Calu3 (cell line): ENCODE measurements at regions of chr18 and their contacts with region 1.

Region 1: DNA sequence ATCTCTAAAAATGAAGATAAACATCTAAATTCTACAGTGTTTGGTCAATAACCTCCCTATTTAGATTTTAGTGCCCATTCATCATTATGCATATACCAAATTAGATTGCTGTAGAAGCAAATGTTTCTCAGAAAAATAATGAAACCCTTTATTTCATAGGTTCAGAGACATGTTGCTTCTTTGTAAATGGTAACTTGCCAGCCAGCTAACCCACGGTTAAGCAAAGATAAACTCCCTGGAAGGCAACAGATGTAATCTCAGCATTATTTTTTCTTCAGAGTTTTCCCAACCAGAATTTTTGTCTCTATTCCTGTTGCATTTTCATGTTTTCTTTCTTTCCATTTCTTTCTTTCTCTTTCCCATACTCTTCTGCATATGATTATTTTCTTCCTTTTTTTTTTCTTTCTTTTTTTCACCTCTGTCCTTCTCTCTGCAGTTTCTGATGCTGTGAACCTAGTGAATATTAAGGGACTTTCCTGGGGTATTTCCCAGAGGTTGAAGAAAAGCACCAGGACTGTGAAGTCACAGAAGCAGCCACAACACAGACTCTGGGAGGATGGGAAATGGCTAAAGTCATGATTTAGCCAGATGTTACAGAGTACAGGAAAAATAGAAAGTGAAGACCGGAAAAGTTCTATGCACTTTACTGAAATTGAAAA is 50.0 kb upstream of the DSG1 start:
- DNase-seq: no peak
- H3K4me3 Mint-ChIP-seq: no peak overlapping the region
- H3K27ac Mint-ChIP-seq: peak overlapping the region; percentile 15
- H3K4me1 Mint-ChIP-seq: peaks cover 40% of the 10 kb centered on the region
- H3K27me3 Mint-ChIP-seq: no peaks in the 10 kb centered on the region
- CTCF ChIP-seq: no peak

Region 2: GRCh38 chr18:31399306-31400032 is 131.5 kb after region 1 on chr18:
- CTCF ChIA-PET with region 1: no interaction called
- intact Hi-C with region 1: loop called (anchors 5 kb)
- DNase-seq: peak; percentile 21
- H3K4me3 Mint-ChIP-seq: no peak overlapping the region
- H3K27ac Mint-ChIP-seq: peak overlapping the region; percentile 49
- H3K4me1 Mint-ChIP-seq: peaks cover 50% of the 10 kb centered on the region
- H3K27me3 Mint-ChIP-seq: no peaks in the 10 kb centered on the region
- CTCF ChIP-seq: no peak

Region 3: DNA sequence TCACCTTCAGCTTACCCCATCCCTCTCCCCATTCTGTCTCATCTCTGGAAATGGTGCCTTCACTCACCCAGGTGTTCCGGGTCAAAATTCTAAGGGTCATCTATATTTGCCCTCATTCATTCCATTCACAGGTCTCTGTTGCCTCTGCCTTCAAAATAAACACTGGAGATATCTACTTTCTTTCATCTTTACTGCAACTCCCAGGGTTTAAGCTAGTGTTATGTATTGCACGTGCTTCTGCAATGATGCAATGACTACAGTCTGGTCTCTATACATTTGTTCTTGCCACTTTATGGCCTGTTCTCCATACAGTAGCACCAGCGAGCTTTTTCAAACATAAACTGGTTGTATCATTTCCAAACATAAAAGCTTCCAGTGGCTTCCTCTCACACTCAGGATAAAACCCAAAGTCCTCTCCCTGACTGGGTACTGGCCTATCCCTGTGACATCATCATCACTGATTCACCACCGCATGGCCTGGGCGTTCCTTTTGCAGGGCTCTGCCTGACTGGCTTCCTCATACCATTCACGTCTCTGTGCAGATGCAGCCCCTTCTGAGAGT is 244.3 kb after region 1 on chr18:
- CTCF ChIA-PET with region 1: interaction called, 4 read pairs
- intact Hi-C with region 1: loop called (anchors 5 kb)
- DNase-seq: peak; percentile 89
- H3K4me3 Mint-ChIP-seq: peak overlapping the region; percentile 58
- H3K27ac Mint-ChIP-seq: peak overlapping the region; percentile 99
- H3K4me1 Mint-ChIP-seq: peaks cover 60% of the 10 kb centered on the region
- H3K27me3 Mint-ChIP-seq: no peaks in the 10 kb centered on the region
- CTCF ChIP-seq: no peak